ENCODE measurements at regions of chr2 and their contacts with region 1.

Region 1: GRCh38 chr2:157336137-157337010 is 10.8 kb upstream of the ERMN start:
- DNase-seq: no peak
- ATAC-seq: peak in 1 of 2 donors; percentile 33

Region 2: DNA sequence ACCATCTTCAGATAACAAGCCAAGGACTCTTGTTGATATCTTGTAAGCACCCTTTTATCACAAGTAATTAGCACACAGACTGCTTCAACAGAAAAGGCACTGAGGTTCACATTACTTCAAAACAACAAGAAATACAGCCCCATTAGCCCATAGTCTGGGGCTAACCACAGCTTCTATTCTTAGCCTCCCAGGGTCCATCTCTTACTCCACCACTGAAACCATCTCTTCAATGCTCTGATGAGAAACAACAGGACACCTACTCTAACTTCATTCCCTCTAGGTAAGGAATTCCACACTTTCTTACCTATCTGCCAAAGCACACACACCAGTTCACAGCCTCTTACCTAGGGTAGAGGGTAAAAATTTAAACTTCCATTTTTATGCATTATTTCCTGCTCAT is 133.9 kb after region 1 on chr2:
- intact Hi-C with region 1: loop called in 1 of 2 experiments (anchors 10 kb)
- DNase-seq: no peak
- ATAC-seq: no peak

Measured in left cardiac atrium (tissue), 4 donors.